ENCODE measurements at regions of chr3 and their contacts with region 1.

Region 1: DNA sequence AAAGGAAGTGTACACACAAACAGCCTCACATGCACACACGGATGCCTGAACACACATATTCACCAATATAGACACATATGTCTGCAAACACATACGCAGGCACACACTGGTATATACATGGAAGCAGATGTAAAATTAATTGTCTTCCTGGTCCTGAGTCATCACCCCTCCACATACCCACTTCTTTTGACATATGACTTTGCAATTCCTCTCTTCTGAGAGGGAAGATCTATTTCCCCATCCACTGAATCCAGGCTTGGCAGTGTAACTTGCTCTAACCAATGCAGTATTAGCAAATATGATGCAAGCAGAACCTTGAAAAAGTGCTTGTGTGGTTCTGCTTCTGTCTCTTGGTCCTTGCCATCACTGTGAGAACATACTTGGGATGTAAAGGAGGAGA is 76.8 kb upstream of the HRH1 start:
- H3K4me3 Mint-ChIP-seq: no peak overlapping the region
- H3K27ac Mint-ChIP-seq: peak overlapping the region; percentile 68
- H3K4me1 Mint-ChIP-seq: peaks cover 79% of the 10 kb centered on the region
- H3K27me3 Mint-ChIP-seq: peaks cover 6% of the 10 kb centered on the region

Region 2: DNA sequence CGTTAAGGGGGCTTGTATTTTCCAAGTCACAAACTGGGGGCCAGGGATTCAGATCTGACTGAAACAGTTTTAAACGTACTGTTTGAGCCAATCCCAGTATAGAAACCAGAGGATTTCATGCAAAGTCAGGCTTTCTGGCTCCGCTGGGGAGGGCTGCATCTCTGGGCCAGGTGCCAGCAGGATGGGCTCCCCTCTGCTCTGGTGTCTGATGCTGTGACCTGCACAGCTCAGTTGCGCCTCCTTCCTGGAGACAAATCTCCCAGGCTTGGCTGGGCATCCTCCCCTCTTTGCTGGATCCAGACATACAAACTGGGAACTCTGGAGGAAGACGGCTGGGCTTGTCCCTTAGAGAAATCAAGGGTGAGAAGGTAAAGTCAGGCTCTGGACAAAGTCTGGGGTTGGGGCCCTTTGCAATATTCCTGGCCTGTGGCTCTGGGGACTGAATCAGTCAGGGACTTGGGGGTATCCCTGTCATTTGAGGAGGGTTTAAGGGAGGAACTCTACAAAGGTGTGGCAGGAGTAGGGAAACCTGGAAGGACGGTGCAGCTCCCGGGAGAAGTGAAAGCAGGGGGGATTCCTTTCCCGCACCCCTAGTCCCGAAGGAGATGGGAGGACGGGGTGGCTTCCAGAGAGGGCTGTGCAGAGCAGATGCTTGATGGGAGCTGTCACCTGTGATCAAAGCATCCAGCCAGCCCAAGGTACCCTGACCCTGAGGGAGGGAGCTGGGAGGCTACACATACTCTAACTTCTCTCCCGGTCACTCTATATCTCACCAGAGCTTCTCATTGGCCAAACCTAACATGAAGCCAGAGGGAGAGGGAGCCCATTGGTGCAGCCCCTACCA is 457.3 kb before region 1 on chr3:
- intact Hi-C with region 1: no loop called
- H3K4me3 Mint-ChIP-seq: no peak overlapping the region
- H3K27ac Mint-ChIP-seq: no peak overlapping the region
- H3K4me1 Mint-ChIP-seq: no peaks in the 10 kb centered on the region
- H3K27me3 Mint-ChIP-seq: peaks cover 20% of the 10 kb centered on the region

Region 3: GRCh38 chr3:11140054-11140712 is 62.7 kb after region 1 on chr3:
- intact Hi-C with region 1: loop called (anchors 5 kb)
- H3K4me3 Mint-ChIP-seq: peak overlapping the region; percentile 57
- H3K27ac Mint-ChIP-seq: peak overlapping the region; percentile 88
- H3K4me1 Mint-ChIP-seq: peaks cover 75% of the 10 kb centered on the region
- H3K27me3 Mint-ChIP-seq: peaks cover 9% of the 10 kb centered on the region

Region 4: GRCh38 chr3:11155341-11156025 is 78.0 kb after region 1 on chr3:
- intact Hi-C with region 1: loop called (anchors 2 kb)
- H3K4me3 Mint-ChIP-seq: peak overlapping the region; percentile 99
- H3K27ac Mint-ChIP-seq: peak overlapping the region; percentile 82
- H3K4me1 Mint-ChIP-seq: peaks cover 75% of the 10 kb centered on the region
- H3K27me3 Mint-ChIP-seq: peaks cover 8% of the 10 kb centered on the region

Measured in dendritic cell treated with granulocyte-macrophage colony-stimulating factor and Interleukin-4, amounts not matched to agents 40 ng/mL and 50 ng/mL, for 4 days (primary cell).